ENCODE measurements at regions of chr16 and their contacts with region 1.

Region 1: DNA sequence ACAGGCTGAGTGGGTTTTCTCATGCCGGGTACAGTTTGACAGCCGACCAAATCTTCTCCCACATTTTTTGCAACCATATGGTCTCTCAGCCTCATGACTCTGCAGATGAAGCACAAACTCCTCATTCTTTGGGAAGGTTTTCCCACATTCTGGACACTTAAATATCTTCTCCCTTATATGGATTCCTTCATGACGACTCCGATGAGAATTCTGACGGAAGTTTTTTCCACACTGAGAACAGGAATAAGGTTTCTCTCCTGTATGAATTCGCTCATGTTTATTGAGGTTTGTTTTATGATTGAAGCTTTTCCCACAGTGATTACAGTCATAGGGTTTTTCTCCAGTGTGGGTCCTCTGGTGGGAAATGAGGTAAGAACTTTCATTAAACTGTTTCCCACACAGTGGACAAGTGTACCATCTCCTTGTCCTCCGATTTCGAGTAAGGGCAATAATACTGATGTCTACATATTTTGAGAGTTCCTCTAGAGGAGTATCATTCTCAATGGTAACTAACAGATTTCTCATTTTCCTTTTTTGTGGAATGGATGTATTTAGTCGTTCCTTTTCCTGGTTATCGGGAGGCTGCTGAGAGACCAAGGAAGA is 10.9 kb downstream of the ZNF200 start:
- DNase-seq: no peak
- H3K4me3 ChIP-seq: no peak overlapping the region
- H3K27ac ChIP-seq: no peak overlapping the region
- H3K4me1 ChIP-seq: no peaks in the 10 kb centered on the region
- H3K27me3 ChIP-seq: no peaks in the 10 kb centered on the region
- CTCF ChIP-seq: no peak
- EP300 ChIP-seq: no peak
- POLR2A ChIP-seq: no peak

Region 2: GRCh38 chr16:3264137-3265036 is 40.4 kb after region 1 on chr16:
- intact Hi-C with region 1: no loop called
- DNase-seq: peak; percentile 98
- H3K4me3 ChIP-seq: peak overlapping the region; percentile 85 to 94 (median 88)
- H3K27ac ChIP-seq: peak overlapping the region; percentile 98 to 100 (median 99)
- H3K4me1 ChIP-seq: peaks cover 20 to 34% (median 23%) of the 10 kb centered on the region in 4 donors
- H3K27me3 ChIP-seq: no peaks in the 10 kb centered on the region
- CTCF ChIP-seq: peak in 2 of 3 experiments; percentile 0 to 25
- EP300 ChIP-seq: no peak
- POLR2A ChIP-seq: peak; percentile 88

Region 3: DNA sequence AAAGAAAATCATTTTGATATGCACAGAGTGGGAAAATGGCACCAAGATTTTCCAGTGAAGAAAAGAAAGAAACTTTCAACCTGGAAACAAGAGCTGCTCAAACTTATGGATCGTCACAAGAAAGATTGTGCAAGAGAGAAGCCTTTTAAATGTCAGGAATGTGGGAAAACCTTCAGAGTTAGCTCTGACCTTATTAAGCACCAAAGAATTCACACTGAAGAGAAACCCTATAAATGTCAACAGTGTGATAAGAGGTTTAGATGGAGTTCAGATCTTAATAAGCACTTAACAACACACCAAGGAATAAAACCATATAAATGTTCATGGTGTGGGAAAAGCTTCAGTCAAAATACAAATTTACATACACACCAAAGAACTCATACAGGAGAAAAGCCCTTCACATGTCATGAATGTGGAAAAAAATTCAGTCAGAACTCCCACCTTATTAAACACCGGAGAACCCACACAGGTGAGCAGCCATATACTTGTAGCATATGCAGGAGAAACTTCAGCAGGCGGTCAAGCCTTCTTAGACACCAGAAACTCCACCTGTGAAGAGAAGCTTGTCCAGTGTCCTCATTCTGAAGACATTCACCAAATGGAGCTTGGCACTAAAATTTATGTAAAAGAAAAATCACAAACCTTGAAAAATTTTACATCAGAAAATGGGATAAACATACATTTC is 93.4 kb after region 1 on chr16:
- intact Hi-C with region 1: loop called (anchors 10 kb)
- DNase-seq: no peak
- H3K4me3 ChIP-seq: no peak overlapping the region
- H3K27ac ChIP-seq: no peak overlapping the region
- H3K4me1 ChIP-seq: no peaks in the 10 kb centered on the region
- H3K27me3 ChIP-seq: no peaks in the 10 kb centered on the region
- CTCF ChIP-seq: no peak
- EP300 ChIP-seq: no peak
- POLR2A ChIP-seq: no peak

Measured in esophagus muscularis mucosa (tissue), 4 donors.